ENCODE measurements at regions of chr4 and their contacts with region 1.

Region 1: DNA sequence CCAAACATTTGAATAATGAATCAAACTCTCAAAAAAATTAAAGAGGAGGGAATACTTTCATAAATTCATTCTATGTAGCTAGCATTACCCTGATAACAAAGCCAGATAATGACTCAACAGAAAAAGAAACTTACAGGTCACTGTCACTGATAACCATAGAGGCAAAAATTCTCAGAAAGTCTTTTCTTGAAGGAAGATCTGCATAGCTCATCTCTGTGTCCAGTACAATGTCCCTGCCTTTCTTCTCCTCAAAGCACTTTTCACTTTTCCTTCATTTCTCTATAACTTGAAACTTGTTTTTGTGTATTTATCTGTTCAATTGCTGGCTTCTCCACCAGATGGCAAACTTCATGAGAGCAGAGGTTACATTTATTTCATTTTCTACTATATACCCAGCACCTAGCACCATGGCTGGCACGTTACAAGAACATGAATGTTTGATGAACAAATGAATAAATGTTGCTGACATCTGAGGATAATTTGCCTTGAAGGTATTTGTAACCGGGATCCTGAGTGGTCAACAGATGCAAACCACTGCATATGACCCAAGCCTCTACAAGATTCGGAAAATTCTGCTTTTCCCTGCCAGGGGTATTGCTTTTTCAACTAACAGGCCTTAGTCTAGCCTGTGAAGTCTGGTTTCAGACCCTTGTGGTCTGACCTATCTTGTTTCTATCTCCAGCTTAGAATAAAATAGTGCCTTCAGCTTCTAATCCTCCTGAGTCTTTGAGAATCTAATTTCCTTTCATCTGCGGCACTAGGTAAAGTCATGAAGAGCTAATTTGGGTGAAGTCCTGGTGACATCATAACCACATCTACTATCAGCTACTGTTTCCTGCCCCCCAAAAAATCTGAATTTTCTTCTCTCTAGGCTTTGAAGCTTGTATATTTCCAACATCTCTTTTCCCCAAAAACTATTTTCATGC is 52.5 kb upstream of the ANTXR2 start:
- DNase-seq: no peak
- H3K4me3 ChIP-seq: no peak overlapping the region
- H3K27ac ChIP-seq: no peak overlapping the region
- H3K27me3 ChIP-seq: no peaks in the 10 kb centered on the region
- CTCF ChIP-seq: peak; percentile 62

Region 2: DNA sequence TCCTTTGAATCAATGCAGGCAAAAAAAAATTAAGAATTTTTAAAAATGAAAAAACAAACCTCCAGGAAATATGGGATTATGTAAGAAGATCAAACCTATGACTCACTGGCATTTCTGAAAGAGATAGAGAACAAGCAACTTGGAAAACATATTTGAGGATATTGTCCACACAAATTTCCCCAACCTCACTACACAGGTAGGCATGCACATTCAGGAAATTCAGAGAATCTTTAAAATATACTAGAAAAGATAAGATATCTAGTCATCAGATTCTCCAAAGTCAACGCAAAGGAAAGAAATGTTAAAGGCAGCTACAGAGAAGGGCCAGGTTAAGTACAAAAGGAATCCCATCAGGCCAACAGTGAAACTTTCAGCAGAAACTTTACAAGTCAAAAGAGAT is 138.1 kb before region 1 on chr4:
- CTCF ChIA-PET with region 1: no interaction called
- POLR2A ChIA-PET with region 1: no interaction called
- DNase-seq: no peak
- H3K4me3 ChIP-seq: no peak overlapping the region
- H3K27ac ChIP-seq: no peak overlapping the region
- H3K27me3 ChIP-seq: no peaks in the 10 kb centered on the region
- CTCF ChIP-seq: no peak

Region 3: DNA sequence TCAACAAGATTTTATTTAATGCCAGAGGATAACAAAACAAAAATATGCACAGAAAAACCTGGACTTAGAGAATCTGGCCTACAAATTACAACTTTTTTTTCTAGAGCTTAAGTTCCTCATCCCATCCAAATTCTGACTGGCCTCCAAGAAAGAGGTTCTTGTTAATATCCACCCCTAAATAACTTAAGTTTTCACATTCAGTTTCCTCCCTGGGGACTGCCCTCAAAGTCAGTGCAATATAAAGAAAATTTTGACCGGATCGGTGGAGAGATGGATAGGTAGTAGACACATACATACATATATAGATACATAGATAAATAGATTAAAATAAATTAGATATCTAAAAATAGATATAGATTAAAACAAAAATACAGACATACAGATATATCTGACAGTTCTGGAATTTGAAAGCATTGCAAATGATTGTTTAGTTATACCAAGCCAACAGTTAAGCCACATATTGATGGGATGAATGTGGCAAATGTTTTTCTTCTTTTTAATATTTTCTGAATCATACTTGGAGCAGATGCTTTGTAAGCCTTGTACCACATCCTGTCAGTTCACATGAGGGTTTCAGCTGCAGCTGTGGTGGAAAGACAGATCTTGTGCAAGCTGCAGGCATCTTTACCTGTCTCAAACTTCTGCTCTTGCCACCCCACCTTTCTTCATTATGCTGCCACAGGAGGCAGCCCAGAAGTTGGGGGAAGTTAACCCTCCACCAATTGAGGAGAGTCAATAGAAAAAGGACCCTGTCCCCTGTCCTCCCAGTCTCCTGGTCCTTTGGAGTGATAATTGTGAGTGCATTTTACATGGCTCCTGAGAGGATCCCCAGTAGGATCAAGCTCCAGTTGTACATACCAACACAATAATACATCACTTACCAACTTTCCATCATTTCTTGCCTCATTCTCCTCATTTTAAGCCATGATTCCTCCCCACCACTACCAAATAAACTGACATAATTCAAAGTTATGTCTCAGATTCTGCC is 13.3 kb after region 1 on chr4:
- CTCF ChIA-PET with region 1: interaction called, 19 read pairs
- POLR2A ChIA-PET with region 1: no interaction called
- DNase-seq: no peak
- H3K4me3 ChIP-seq: no peak overlapping the region
- H3K27ac ChIP-seq: peak overlapping the region; percentile 33
- H3K27me3 ChIP-seq: no peaks in the 10 kb centered on the region
- CTCF ChIP-seq: no peak